ENCODE measurements at regions of chr5 and their contacts with region 1.

Region 1: GRCh38 chr5:74673011-74673790 is 11.8 kb upstream of the HEXB start:
- DNase-seq: peak; percentile 21
- ATAC-seq: no peak
- H3K4me3 ChIP-seq: no peak overlapping the region
- H3K4me3 Mint-ChIP-seq: no peak overlapping the region
- H3K27ac ChIP-seq: no peak overlapping the region
- H3K27ac Mint-ChIP-seq: no peak overlapping the region
- H3K4me1 ChIP-seq: no peaks in the 10 kb centered on the region
- H3K4me1 Mint-ChIP-seq: no peaks in the 10 kb centered on the region
- H3K27me3 ChIP-seq: peaks cover 0 to 13% (median 0%) of the 10 kb centered on the region in 4 experiments
- H3K27me3 Mint-ChIP-seq: peaks cover 30% of the 10 kb centered on the region
- CTCF ChIP-seq: peak; percentile 26

Region 2: GRCh38 chr5:74433255-74433895 is 239.8 kb before region 1 on chr5:
- CTCF ChIA-PET with region 1: no interaction called
- POLR2A ChIA-PET with region 1: no interaction called
- intact Hi-C with region 1: no loop called
- DNase-seq: peak; percentile 16
- ATAC-seq: no peak
- H3K4me3 ChIP-seq: no peak overlapping the region
- H3K4me3 Mint-ChIP-seq: peak overlapping the region; percentile 34
- H3K27ac ChIP-seq: no peak overlapping the region
- H3K27ac Mint-ChIP-seq: no peak overlapping the region
- H3K4me1 ChIP-seq: peaks cover 11 to 18% of the 10 kb centered on the region in 2 donors
- H3K4me1 Mint-ChIP-seq: peaks cover 11% of the 10 kb centered on the region
- H3K27me3 ChIP-seq: peaks cover 0 to 16% (median 6%) of the 10 kb centered on the region in 4 experiments
- H3K27me3 Mint-ChIP-seq: peaks cover 42% of the 10 kb centered on the region
- CTCF ChIP-seq: no peak

Region 3: GRCh38 chr5:74877624-74878304 is 204.6 kb after region 1 on chr5:
- CTCF ChIA-PET with region 1: no interaction called
- POLR2A ChIA-PET with region 1: no interaction called
- intact Hi-C with region 1: no loop called
- DNase-seq: no peak
- ATAC-seq: no peak
- H3K4me3 ChIP-seq: no peak overlapping the region
- H3K4me3 Mint-ChIP-seq: no peak overlapping the region
- H3K27ac ChIP-seq: no peak overlapping the region
- H3K27ac Mint-ChIP-seq: no peak overlapping the region
- H3K4me1 ChIP-seq: no peaks in the 10 kb centered on the region
- H3K4me1 Mint-ChIP-seq: no peaks in the 10 kb centered on the region
- H3K27me3 ChIP-seq: no peaks in the 10 kb centered on the region
- H3K27me3 Mint-ChIP-seq: peaks cover 3% of the 10 kb centered on the region
- CTCF ChIP-seq: no peak

Region 4: DNA sequence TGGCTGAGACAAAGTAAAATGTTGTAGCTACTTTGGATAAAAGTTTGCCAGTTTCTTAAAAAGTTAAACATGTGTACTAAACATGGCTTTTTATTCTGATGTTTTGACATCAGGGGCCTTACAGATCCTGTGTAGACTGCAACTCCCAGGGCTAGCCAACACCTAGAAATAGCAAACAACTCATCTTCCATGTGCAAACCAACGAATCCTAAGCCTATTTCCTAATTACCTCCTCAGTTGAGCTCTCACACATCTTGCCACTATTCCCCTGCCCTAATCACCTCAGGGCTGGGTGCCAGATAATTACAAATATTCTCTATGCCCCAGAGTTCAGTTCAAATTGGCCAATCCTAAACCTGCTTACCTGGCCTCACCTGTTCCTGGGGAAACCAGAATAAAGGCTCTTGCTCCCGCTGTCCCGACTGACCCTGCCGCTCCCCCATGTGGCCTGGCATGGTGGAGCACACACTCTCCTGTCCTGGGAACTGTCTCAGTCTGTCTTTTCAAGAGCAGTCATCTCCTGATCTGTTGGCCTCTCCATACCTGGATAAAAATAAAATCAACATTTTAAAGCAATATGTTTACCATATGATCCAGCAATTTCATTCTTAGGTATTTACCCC is 230.1 kb after region 1 on chr5:
- CTCF ChIA-PET with region 1: no interaction called
- POLR2A ChIA-PET with region 1: no interaction called
- intact Hi-C with region 1: loop called (anchors 5 kb)
- DNase-seq: peak; percentile 20
- ATAC-seq: peak; percentile 67
- H3K4me3 ChIP-seq: no peak overlapping the region
- H3K4me3 Mint-ChIP-seq: no peak overlapping the region
- H3K27ac ChIP-seq: no peak overlapping the region
- H3K27ac Mint-ChIP-seq: no peak overlapping the region
- H3K4me1 ChIP-seq: no peaks in the 10 kb centered on the region
- H3K4me1 Mint-ChIP-seq: no peaks in the 10 kb centered on the region
- H3K27me3 ChIP-seq: no peaks in the 10 kb centered on the region
- H3K27me3 Mint-ChIP-seq: no peaks in the 10 kb centered on the region
- CTCF ChIP-seq: peak; percentile 19

Measured in B cell (primary cell).